Ascending aorta (tissue), 2 donors: ENCODE measurements at regions of chr9 and their contacts with region 1.

Region 1: GRCh38 chr9:126650404-126651341 is 36.9 kb downstream of the LMX1B start:
- DNase-seq: no peak
- H3K4me3 ChIP-seq: no peak overlapping the region
- H3K27ac ChIP-seq: no peak overlapping the region
- H3K4me1 ChIP-seq: no peaks in the 10 kb centered on the region
- H3K27me3 ChIP-seq: no peaks in the 10 kb centered on the region
- CTCF ChIP-seq: no peak

Region 2: DNA sequence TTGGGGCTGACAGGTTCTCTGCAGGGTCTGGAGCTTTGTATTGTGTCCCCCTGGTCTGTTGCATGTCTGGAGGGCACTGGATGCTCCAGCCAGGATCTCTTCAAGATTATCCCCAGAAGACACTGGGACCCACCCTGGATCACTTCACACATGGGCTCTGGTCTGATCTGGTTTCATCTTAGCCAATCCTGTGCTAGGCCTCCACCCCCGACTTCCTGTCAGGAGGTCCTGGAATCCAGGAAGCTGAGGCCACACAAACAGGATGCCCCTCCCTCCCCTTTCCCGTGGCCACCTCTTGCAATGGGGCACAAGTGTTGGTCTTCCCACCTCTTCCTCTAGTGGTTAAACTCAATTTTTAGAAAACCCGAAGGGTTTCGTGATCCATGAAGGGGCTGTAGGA is 566.7 kb before region 1 on chr9:
- intact Hi-C with region 1: no loop called
- DNase-seq: no peak
- H3K4me3 ChIP-seq: no peak overlapping the region
- H3K27ac ChIP-seq: no peak overlapping the region
- H3K4me1 ChIP-seq: no peaks in the 10 kb centered on the region
- H3K27me3 ChIP-seq: no peaks in the 10 kb centered on the region
- CTCF ChIP-seq: no peak

Region 3: GRCh38 chr9:126326228-126327005 is 324.3 kb before region 1 on chr9 and contains the start of gene MVB12B:
- intact Hi-C with region 1: no loop called
- DNase-seq: no peak
- H3K4me3 ChIP-seq: peak within 1 kb of the TSS; percentile 63 to 79
- H3K27ac ChIP-seq: peak within 1 kb of the TSS; percentile 68 to 82
- H3K4me1 ChIP-seq: no peaks in the 10 kb centered on the region
- H3K27me3 ChIP-seq: no peaks in the 10 kb centered on the region
- CTCF ChIP-seq: no peak
- total RNA-seq, gene MVB12B: 9.4 TPM

Region 4: GRCh38 chr9:126673689-126674364 is 23.2 kb after region 1 on chr9:
- intact Hi-C with region 1: loop called (anchors 2 kb)
- DNase-seq: no peak
- H3K4me3 ChIP-seq: no peak overlapping the region
- H3K27ac ChIP-seq: no peak overlapping the region
- H3K4me1 ChIP-seq: no peaks in the 10 kb centered on the region
- H3K27me3 ChIP-seq: no peaks in the 10 kb centered on the region
- CTCF ChIP-seq: no peak